ENCODE measurements at regions of chr4 and their contacts with region 1.

Region 1: DNA sequence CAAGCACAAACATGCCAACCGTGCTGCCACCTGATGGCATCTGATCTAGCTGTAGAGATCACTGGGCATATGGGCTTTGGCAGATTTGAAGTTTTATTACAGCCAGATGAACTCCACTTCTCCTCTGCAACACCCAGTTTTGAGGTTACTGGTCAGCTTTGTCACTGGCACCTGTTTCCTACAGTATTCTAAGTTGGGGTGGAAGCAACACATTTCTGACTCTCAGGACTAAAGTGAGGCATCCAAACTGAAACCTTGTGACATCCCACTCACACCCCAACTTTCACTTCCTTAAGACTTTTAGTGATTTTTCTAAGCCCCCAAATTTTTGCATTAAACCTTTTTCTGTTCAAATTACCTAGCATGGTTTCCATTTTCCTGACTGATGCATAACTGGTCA is 115.1 kb upstream of the PCDH18 start:
- DNase-seq: no peak
- H3K4me3 ChIP-seq: no peak overlapping the region
- H3K27ac ChIP-seq: no peak overlapping the region
- H3K4me1 ChIP-seq: no peaks in the 10 kb centered on the region
- H3K27me3 ChIP-seq: no peaks in the 10 kb centered on the region
- CTCF ChIP-seq: no peak
- POLR2A ChIP-seq: no peak

Region 2: GRCh38 chr4:137394018-137394417 is 253.4 kb before region 1 on chr4:
- intact Hi-C with region 1: no loop called
- DNase-seq: no peak
- H3K4me3 ChIP-seq: no peak overlapping the region
- H3K27ac ChIP-seq: no peak overlapping the region
- H3K4me1 ChIP-seq: no peaks in the 10 kb centered on the region
- H3K27me3 ChIP-seq: no peaks in the 10 kb centered on the region
- CTCF ChIP-seq: no peak
- POLR2A ChIP-seq: no peak

Region 3: DNA sequence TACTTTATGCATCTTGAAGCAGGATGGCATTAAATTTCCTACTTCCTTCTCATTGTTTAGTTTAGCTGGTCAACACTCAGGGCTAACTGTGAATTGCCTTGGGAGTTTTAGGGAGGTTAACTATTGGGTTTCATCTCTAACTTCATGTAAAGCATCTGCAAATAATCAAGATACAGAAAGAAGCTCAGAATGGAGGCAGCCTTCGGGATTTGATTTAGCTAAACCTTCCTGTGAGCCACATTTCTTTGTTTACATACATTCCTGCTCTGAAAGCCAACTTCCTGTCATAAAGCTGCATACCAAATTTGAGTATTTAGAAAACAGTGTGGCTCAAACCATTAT is 16.6 kb after region 1 on chr4:
- intact Hi-C with region 1: no loop called
- DNase-seq: no peak
- H3K4me3 ChIP-seq: no peak overlapping the region
- H3K27ac ChIP-seq: peak overlapping the region; percentile 73
- H3K4me1 ChIP-seq: peaks cover 12% of the 10 kb centered on the region
- H3K27me3 ChIP-seq: no peaks in the 10 kb centered on the region
- CTCF ChIP-seq: no peak
- POLR2A ChIP-seq: no peak

Region 4: DNA sequence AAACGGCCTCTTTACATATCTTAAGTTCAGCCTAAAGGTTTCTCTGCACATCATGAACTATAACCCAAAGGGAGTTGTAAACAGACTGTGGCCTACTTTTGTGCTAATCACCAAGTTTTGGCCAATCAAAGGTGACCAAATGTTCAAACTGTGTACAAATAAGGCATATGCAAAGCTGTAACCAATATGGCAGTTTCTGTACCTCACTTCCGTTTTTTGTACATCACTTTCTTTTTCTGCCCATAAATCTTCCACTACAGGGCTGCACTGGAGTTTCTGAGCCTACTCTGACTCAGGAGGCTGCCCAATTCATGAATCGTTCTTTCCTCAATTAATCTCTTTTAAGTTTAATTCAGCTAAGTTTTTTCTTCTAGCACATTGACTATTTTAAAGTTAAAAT is 276.1 kb after region 1 on chr4:
- intact Hi-C with region 1: loop called (anchors 5 kb)
- DNase-seq: no peak
- H3K4me3 ChIP-seq: no peak overlapping the region
- H3K27ac ChIP-seq: no peak overlapping the region
- H3K4me1 ChIP-seq: no peaks in the 10 kb centered on the region
- H3K27me3 ChIP-seq: no peaks in the 10 kb centered on the region
- CTCF ChIP-seq: no peak
- POLR2A ChIP-seq: no peak